ENCODE measurements at regions of chr1 and their contacts with region 1.

Region 1: DNA sequence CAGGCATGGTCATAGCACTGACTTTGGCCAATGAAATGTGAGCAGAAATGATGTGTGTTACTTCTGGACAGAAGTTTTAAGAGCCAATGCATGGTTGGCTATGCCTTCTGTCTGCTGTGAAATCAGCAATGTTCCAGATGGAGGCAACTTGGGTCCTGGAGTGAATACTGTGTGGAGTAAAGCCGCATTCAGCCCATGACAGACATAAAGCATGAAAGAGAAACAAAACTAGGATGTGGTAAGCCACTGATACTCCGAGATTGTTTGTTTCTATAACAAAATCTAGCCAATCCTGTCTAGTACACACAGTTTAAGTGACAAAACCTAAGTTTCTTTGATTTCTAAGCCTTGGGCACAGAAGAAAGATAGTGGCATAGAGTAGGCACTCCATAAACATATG is 47.1 kb upstream of the ARHGAP29 start:
- DNase-seq: no peak
- ATAC-seq: no peak
- H3K4me3 ChIP-seq: no peak overlapping the region
- H3K27ac ChIP-seq: peak overlapping the region; percentile 48; the same call in 1 of the 2 replicates
- H3K4me1 ChIP-seq: peaks cover 49% of the 10 kb centered on the region
- H3K27me3 ChIP-seq: no peaks in the 10 kb centered on the region
- CTCF ChIP-seq: no peak

Region 2: GRCh38 chr1:94061513-94062443 is 222.7 kb before region 1 on chr1:
- CTCF ChIA-PET with region 1: no interaction called
- POLR2A ChIA-PET with region 1: interaction called, 19 read pairs
- intact Hi-C with region 1: no loop called
- DNase-seq: peak; percentile 77
- ATAC-seq: peak; percentile 89
- H3K4me3 ChIP-seq: no peak overlapping the region
- H3K27ac ChIP-seq: peak overlapping the region; percentile 42
- H3K4me1 ChIP-seq: peaks cover 37% of the 10 kb centered on the region
- H3K27me3 ChIP-seq: no peaks in the 10 kb centered on the region
- CTCF ChIP-seq: peak; percentile 92

Region 3: GRCh38 chr1:94305704-94306103 is 21.2 kb after region 1 on chr1:
- CTCF ChIA-PET with region 1: no interaction called
- POLR2A ChIA-PET with region 1: no interaction called
- intact Hi-C with region 1: loop called (anchors 2 kb)
- DNase-seq: peak; percentile 76
- ATAC-seq: no peak
- H3K4me3 ChIP-seq: no peak overlapping the region
- H3K27ac ChIP-seq: peak overlapping the region; percentile 82
- H3K4me1 ChIP-seq: peaks cover 61% of the 10 kb centered on the region
- H3K27me3 ChIP-seq: no peaks in the 10 kb centered on the region
- CTCF ChIP-seq: no peak